Sciatic nerve (tissue), 2 donors: ENCODE measurements at regions of chr10 and their contacts with region 1.

Region 1: GRCh38 chr10:88545359-88545758 is 37.8 kb downstream of the RNLS start:
- DNase-seq: no peak
- ATAC-seq: no peak

Region 2: GRCh38 chr10:87578160-87578841 is 967.1 kb before region 1 on chr10:
- intact Hi-C with region 1: no loop called
- DNase-seq: no peak
- ATAC-seq: peak; percentile 28

Region 3: GRCh38 chr10:87850742-87851205 is 694.6 kb before region 1 on chr10:
- intact Hi-C with region 1: loop called (anchors 5 kb)
- DNase-seq: peak; percentile 66
- ATAC-seq: peak; percentile 95